Motor neuron (in vitro differentiated cells): ENCODE measurements at regions of chr1 and their contacts with region 1.

Region 1: GRCh38 chr1:37602750-37603694 is 7.3 kb upstream of the GNL2 start:
- ATAC-seq: peak; percentile 64 to 88 (median 78)
- H3K4me3 ChIP-seq: no peak overlapping the region
- H3K27ac ChIP-seq: no peak overlapping the region
- H3K4me1 ChIP-seq: peaks cover 3% of the 10 kb centered on the region in 2 donors

Region 2: DNA sequence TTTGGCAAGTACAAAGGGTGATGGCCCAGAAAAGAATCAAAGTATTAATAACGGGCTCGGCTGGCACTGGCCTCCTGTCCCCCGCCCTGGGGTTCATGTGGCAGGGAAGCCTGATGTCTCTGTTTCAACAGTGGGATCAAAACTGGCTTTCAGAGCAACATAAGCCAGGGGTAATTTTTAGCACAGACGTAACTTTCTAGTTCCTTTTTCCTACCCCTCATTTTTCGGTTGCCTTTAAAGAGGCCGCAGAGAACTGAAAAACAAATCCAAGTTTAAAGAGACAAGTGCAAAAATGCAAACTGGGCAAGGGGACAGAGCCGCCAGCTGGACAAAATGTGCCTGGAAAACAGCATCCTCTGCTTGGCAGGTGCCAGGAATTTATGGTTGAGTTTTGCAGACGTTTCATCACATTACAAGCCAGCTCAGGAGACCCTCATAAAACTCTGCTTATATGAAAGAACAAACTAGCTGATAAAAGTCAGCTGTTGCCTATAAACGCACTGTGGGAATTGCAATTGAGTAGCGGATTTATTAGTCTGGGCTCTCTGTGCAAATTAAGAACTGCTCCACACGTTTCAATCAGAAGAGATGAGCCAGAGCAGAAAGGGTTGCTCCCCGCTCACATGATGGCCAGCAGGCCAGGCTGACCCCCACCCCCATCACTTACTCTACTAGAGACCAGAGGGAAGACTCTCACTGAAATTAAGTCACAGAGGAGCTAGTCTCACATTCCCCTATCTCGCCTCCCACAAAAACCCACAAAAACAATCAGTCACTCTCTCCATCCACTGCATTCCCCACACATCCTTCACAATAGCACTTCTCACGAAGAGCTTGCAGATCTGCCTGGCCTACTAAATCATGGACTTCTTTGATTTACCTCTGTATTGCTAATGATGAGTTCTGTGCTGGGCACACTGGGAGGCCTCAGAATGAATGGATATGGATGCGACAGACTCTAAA is 73.5 kb after region 1 on chr1:
- in situ Hi-C with region 1: loop called in 2 of 9 experiments (anchors 10 kb)
- ATAC-seq: peak in 3 of 8 experiments; percentile 54 to 77 (median 56)
- H3K4me3 ChIP-seq: no peak overlapping the region
- H3K27ac ChIP-seq: no peak overlapping the region
- H3K4me1 ChIP-seq: peaks cover 11 to 18% of the 10 kb centered on the region in 2 donors

Region 3: GRCh38 chr1:37682334-37682987 is 79.4 kb after region 1 on chr1:
- in situ Hi-C with region 1: loop called in 2 of 9 experiments (anchors 10 kb)
- ATAC-seq: peak; percentile 62 to 85 (median 73)
- H3K4me3 ChIP-seq: no peak overlapping the region
- H3K27ac ChIP-seq: no peak overlapping the region
- H3K4me1 ChIP-seq: peaks cover 0 to 1% of the 10 kb centered on the region in 2 donors

Region 4: DNA sequence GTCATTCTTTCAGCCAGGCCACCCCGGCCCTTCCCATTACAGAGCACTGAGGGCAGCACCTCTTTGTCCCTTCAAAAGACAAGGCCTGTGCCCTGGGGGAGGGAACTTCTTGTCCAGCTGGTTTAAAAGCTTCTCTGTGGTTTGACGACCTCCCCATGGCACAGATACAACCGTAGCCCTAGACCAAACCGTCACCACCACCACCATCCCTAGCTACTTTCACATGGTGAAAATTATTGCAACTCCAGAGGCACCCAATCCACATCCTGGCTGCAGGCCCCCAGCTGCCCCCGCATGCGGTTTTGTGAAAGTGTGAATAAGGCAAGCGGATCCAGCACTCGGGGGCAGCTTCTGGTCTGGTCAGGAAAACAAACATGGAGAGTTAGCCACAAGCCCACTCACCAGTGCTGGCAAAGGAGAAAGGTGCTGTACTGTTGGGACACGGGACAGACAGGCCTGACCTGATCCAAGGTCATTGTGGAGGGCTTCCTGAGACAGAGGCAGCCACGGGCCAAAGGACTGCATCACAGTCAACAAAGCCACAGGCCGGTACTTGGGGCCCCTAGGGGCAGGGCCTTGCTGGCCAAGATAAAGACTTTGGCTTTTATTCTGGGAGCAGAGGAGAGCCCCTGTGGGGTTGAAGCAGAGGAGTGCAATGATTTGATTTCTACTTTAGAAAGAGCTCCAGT is 120.5 kb after region 1 on chr1:
- in situ Hi-C with region 1: no loop called
- ATAC-seq: no peak
- H3K4me3 ChIP-seq: no peak overlapping the region
- H3K27ac ChIP-seq: no peak overlapping the region
- H3K4me1 ChIP-seq: peaks cover 19 to 23% of the 10 kb centered on the region in 2 donors